ACHN (cell line): ENCODE measurements at regions of chr14 and their contacts with region 1.

Region 1: DNA sequence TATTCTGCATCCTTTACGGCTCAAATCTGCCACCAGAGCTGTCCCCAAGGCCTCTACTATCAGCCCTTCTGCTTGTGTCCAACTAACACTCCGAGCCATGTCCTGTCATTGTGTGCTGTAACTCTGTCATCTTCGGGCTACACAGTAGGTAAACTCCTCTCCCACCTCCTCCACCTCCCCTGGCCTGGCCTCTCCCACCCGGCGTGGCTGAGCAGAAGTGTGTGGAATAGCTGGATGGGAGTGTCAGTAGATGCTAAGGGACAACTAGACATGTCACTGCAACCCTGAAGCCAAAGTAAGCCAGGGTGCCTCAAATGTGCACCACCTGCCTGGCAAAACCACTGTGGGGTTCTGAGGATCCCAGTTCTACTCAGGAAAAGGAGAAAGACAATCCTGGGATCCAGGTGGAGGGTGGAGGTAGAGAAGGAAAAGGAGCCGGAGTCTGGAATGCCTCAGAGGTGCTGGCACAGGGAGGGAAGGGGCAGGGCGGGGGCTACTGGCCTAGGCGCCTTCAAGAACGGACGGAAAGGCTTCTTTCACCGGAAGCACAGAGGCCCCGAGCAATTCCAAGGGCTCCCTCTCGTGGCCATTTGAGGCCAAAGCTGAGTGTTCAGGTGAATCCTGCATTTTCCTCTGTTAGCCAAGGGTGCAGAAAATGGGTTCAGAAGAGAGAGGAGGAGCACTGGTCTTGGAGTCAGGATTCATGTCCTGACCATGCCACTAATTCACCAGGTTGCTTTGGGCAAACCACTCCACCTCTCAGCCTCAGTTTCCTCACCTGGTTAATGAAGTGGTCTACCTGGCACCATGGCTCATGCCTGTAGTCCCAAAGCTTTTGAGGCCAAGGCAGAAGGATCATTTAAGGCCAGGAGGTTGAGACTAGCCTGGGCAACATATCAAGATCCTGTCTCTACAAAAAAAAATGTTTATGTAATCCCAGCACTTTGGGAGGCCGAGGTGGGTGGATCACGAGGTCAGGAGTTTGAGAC is 20.5 kb upstream of the FAM181A start:
- DNase-seq: peak; percentile 62

Region 2: GRCh38 chr14:93655078-93655750 is 251.4 kb before region 1 on chr14:
- in situ Hi-C with region 1: loop called (anchors 25 kb)
- DNase-seq: peak; percentile 63

Region 3: DNA sequence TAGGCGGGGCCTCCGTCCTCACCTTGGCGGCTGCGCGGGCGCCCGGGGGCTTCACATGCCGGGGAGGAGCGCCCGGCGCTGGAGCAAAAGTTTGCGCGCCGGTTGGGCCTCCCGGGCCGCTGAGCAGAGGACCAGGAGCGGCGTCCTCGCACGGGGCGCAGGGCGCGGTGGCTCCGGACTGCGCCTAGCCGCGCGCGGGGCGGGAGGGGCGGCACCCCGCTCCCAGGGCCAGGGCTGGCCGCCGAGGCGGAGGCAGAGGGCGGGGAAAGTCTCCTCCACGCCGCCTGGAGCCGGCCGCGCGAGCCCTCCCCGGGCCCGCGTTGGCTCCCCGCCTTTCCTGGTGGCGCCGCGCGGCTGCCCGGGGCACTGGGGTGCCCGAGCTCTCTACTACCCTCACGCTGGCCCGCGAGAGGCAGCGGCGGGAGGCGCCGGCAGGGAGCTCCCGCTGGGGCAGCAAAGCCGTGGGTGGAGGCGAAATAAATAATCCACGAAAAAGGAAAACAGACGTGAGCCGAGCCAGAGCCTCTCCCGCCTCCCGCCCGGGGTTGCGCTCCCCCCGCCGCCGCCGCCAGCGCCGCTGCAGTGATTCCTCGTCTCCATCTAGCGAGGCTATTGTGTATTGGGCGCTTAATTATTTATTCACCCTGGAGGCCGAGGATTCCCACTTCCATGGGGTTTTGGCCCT is 118.0 kb before region 1 on chr14:
- in situ Hi-C with region 1: no loop called
- DNase-seq: peak; percentile 8

Region 4: DNA sequence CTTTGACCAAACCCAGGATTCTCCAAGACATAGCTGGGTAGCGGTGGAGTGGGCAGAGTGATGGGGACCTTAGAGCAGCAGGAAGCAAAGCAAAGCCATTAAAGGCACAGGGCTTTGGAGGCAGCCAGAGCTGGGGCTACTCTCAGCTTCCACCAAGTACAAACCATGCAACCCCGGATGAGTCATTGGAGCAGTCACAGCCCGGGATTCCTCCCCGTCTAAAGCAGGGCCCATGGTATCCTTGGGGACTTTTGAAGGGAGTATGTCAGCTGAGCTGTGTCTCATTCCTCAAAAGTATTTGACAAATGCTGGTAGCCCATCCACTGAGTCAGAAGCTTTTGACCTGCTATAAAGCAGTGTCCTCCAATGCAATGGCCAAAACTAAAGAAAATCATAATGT is 194.2 kb after region 1 on chr14:
- in situ Hi-C with region 1: no loop called
- DNase-seq: peak; percentile 39

Region 5: DNA sequence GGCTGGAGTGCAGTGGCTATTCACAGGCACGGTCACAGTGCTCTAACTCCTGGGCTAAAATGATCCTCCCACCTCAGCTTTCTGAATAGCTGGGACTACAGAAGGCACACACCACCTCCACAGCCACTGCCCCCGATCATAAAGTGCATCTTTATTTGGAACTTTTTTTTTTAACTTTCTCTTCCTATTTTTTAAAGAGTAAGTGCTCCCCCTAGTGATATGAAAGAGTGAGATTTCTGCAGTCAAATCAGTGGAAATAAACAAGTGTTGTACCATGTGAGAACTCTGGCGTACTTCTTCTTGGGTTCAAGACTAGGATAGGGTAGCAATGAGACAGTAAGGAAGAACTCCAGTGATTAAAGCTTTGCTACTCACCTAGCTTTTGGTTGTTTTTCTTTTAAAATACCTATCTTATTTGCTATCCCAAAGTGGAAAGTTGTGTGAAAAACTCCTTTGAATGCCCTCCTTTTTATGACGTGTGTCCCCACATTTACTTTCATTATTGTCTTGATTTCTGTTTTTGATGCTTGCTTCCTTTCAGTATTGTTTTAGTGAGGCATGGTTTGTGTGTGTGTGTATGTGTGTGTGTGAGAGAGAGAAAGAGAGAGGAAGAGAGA is 274.1 kb after region 1 on chr14:
- in situ Hi-C with region 1: no loop called
- DNase-seq: peak; percentile 75

Region 6: DNA sequence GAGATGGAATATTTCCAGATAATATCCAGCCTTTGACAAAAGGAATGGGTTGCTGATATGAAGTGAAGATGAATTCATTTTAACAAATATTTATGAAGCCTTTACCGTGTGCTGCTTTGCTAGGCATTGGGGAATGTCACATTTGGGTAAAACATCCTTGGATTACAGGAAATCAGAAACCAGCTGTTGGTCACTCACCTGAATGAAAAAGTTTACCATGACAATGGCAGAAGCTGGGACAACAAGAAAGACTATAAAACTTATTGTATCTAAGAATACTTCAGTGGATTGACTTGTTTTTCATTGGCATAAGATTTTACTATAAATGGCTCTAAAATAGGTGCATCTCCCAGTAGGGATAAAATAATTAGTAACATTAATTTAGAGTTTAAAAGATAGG is 287.1 kb after region 1 on chr14:
- in situ Hi-C with region 1: no loop called
- DNase-seq: no peak